Dendritic cell treated with granulocyte-macrophage colony-stimulating factor and Interleukin-4, amounts not matched to agents 40 ng/mL and 50 ng/mL, for 4 days (primary cell): ENCODE measurements at regions of chr1 and their contacts with region 1.

Region 1: GRCh38 chr1:35298464-35298863 is 30.0 kb downstream of the ZMYM4 start:
- H3K4me3 Mint-ChIP-seq: no peak overlapping the region
- H3K27ac Mint-ChIP-seq: no peak overlapping the region
- H3K4me1 Mint-ChIP-seq: peaks cover 8% of the 10 kb centered on the region
- H3K27me3 Mint-ChIP-seq: no peaks in the 10 kb centered on the region

Region 2: DNA sequence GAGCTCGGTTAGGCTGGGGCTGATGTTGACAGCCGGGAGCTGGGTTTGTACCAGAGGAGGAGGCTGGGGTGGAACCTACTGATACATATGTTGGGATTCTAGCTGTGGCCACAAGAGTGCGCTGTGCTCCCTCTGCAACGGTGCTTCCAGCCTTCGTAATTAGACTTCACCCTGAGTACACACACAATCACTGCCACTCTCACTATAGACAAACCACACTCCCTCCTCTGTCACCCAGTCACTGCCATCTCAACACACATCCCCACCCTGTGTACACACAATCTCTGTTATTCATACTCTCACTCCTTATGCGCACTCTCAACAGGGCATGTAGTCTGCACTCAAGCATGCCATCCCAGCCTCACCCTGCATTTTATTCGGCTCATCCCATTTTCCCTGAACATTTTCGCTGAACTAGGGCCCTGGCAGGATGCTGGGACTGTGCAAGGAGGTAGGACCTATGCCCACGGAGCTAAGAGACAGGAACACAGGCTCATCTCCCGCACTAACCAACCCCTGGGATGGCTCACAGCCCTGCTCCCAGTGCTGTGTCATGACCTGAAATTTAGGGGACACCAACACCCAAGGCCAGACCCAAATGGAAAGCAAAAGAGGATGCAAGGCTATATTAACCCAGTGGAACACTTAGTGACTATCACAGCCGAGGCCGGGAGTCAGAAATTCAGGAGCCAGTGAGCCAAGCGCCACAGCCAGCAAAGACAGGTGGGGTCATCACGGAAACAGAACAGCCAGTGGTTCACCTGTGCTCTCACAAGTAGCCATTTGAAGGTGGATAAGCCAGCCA is 511.7 kb before region 1 on chr1:
- intact Hi-C with region 1: loop called (anchors 5 kb)
- H3K4me3 Mint-ChIP-seq: no peak overlapping the region
- H3K27ac Mint-ChIP-seq: no peak overlapping the region
- H3K4me1 Mint-ChIP-seq: peaks cover 5% of the 10 kb centered on the region
- H3K27me3 Mint-ChIP-seq: peaks cover 46% of the 10 kb centered on the region

Region 3: DNA sequence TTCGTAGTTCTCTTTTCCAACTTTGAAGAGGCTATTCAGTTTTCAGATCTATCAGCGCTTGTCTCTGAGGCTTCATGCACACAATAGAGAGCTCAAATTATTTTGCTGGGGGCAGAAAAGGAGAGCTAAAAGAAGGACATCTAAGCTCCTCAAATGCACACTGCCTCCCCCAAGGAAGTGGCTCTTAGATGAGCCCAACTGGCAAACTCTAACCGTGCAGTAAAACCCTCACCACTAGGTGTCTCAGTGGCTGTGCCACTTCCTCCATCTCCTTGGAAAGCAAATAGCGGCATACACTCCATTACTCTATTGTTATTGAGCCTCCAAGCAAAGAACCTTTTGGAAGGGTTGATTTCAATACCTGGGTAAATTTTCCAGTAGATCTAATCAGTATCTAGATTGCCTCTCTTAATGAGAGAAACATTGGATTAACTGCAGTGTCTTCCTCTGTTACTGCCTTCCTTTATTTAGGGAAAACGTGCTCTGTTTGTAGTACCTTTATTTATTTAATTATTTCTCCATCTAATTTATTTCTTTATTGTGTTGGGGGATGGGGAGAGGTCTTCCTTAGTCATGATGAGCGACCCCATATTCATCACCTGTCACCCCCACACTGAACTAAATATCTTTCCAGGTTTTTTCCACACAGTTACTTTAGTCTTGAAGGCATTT is 96.3 kb before region 1 on chr1:
- intact Hi-C with region 1: loop called (anchors 1 kb)
- H3K4me3 Mint-ChIP-seq: no peak overlapping the region
- H3K27ac Mint-ChIP-seq: no peak overlapping the region
- H3K4me1 Mint-ChIP-seq: no peaks in the 10 kb centered on the region
- H3K27me3 Mint-ChIP-seq: no peaks in the 10 kb centered on the region

Region 4: GRCh38 chr1:36257375-36257767 is 958.9 kb after region 1 on chr1:
- intact Hi-C with region 1: no loop called
- H3K4me3 Mint-ChIP-seq: no peak overlapping the region
- H3K27ac Mint-ChIP-seq: no peak overlapping the region
- H3K4me1 Mint-ChIP-seq: peaks cover 5% of the 10 kb centered on the region
- H3K27me3 Mint-ChIP-seq: no peaks in the 10 kb centered on the region